CD14-positive monocyte (primary cell): ENCODE measurements at regions of chr3 and their contacts with region 1.

Region 1: GRCh38 chr3:72100601-72101187 is 315.7 kb upstream of the PROK2 start:
- DNase-seq: peak; percentile 99 to 100 (median 99)
- H3K4me3 ChIP-seq: peak overlapping the region; percentile 47 to 66 (median 48)
- H3K4me3 Mint-ChIP-seq: peak overlapping the region; percentile 81 to 91
- H3K27ac ChIP-seq: peak overlapping the region; percentile 97 to 99
- H3K27ac Mint-ChIP-seq: peak overlapping the region; percentile 100
- H3K4me1 ChIP-seq: peaks cover 60 to 61% of the 10 kb centered on the region in 2 donors
- H3K4me1 Mint-ChIP-seq: peaks cover 65% of the 10 kb centered on the region
- H3K27me3 ChIP-seq: no peaks in the 10 kb centered on the region
- H3K27me3 Mint-ChIP-seq: peaks cover 1 to 7% (median 1%) of the 10 kb centered on the region in 3 donors
- CTCF ChIP-seq: no peak

Region 2: DNA sequence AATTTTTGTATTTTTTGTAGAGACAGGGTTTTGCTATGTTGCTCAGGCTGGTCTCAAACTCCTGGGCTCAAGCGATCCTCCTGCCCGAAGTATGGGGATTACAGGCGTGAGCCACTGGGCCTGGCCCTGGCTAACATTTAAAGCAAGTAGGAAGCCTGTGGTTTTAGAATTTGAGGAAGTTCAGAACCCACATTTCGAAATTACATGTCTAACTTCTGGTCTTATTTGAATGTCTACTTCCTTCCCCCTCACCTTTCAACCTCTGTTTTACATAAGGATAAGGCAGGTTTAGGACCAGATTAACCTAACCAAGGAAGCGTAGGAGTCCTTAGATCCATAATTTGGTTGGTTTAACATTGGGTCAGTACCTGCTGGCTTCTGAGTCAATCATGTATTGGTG is 195.3 kb before region 1 on chr3:
- intact Hi-C with region 1: loop called in 1 of 2 experiments (anchors 10 kb)
- DNase-seq: peak; percentile 78 to 93 (median 88)
- H3K4me3 ChIP-seq: peak overlapping the region in 1 of 3 experiments; percentile 27
- H3K4me3 Mint-ChIP-seq: peak overlapping the region; percentile 39 to 76
- H3K27ac ChIP-seq: no peak overlapping the region
- H3K27ac Mint-ChIP-seq: peak overlapping the region in 6 of 7 donors; percentile 48 to 76 (median 64)
- H3K4me1 ChIP-seq: peaks cover 45 to 50% of the 10 kb centered on the region in 2 donors
- H3K4me1 Mint-ChIP-seq: peaks cover 51% of the 10 kb centered on the region
- H3K27me3 ChIP-seq: peaks cover 67 to 84% of the 10 kb centered on the region in 2 donors
- H3K27me3 Mint-ChIP-seq: peaks cover 92 to 95% (median 94%) of the 10 kb centered on the region in 3 donors
- CTCF ChIP-seq: no peak

Region 3: DNA sequence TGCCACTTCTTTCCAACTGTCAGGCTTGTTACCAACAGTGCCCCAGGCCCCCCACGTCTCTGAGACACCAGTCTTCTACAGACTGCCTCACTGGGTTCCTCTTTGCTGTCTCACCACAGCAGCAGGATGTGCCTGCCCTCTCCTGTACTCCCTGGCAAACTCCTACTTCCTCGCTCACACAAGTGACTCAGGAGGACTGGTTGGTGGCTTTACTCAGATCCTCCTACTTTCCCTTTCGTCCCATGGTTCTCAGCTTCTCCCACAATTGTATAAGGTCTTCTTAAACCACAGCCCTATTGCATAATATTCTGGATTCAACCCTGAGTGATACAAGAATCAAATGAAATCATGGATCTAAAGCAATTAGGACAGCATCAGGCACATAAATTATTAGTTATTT is 69.1 kb before region 1 on chr3:
- intact Hi-C with region 1: loop called in 1 of 2 experiments (anchors 5 kb)
- DNase-seq: peak; percentile 82 to 95 (median 92)
- H3K4me3 ChIP-seq: peak overlapping the region in 1 of 3 experiments; percentile 6
- H3K4me3 Mint-ChIP-seq: peak overlapping the region; percentile 28 to 59
- H3K27ac ChIP-seq: peak overlapping the region in 1 of 2 donors; percentile 50
- H3K27ac Mint-ChIP-seq: peak overlapping the region; percentile 79 to 93 (median 89)
- H3K4me1 ChIP-seq: peaks cover 48 to 53% of the 10 kb centered on the region in 2 donors
- H3K4me1 Mint-ChIP-seq: peaks cover 51% of the 10 kb centered on the region
- H3K27me3 ChIP-seq: no peaks in the 10 kb centered on the region
- H3K27me3 Mint-ChIP-seq: peaks cover 0 to 3% (median 3%) of the 10 kb centered on the region in 3 donors
- CTCF ChIP-seq: peak; percentile 35

Region 4: GRCh38 chr3:72082186-72082715 is 18.4 kb before region 1 on chr3:
- intact Hi-C with region 1: loop called in 1 of 2 experiments (anchors 2 kb)
- DNase-seq: peak; percentile 96 to 99 (median 97)
- H3K4me3 ChIP-seq: peak overlapping the region in 2 of 3 experiments; percentile 19 to 47
- H3K4me3 Mint-ChIP-seq: peak overlapping the region; percentile 46 to 67
- H3K27ac ChIP-seq: peak overlapping the region; percentile 91 to 98
- H3K27ac Mint-ChIP-seq: peak overlapping the region; percentile 95 to 99 (median 99)
- H3K4me1 ChIP-seq: peaks cover 80 to 93% of the 10 kb centered on the region in 2 donors
- H3K4me1 Mint-ChIP-seq: peaks cover 83% of the 10 kb centered on the region
- H3K27me3 ChIP-seq: no peaks in the 10 kb centered on the region
- H3K27me3 Mint-ChIP-seq: peaks cover 2 to 6% (median 3%) of the 10 kb centered on the region in 3 donors
- CTCF ChIP-seq: no peak

Region 5: DNA sequence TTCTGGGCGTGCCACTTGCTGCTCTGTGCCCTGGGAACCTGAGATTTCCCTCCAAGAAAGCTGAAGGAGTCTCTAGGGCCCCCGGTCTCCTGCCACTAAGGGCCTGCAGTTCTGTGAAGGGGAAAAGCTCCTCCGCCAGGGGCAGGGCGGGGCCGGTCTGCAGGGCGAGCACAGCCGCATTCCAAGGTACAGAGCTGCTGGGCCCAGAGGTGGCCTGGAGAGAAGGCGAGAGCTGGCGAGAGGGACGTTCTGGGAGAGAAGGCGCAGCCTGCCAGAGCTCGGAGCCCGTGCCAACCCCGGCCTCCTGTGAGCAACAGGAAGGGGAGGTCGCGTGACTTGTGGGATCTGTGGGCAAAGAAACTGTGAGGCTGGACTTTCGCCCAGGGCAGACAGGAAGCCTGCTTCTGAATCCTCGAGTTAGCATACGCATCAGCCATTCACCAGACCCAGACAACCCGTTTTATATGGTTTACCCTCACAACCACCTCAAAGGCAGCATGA is 247.2 kb after region 1 on chr3:
- intact Hi-C with region 1: loop called in 1 of 2 experiments (anchors 10 kb)
- DNase-seq: peak; percentile 88 to 92 (median 91)
- H3K4me3 ChIP-seq: peak overlapping the region in 1 of 3 experiments; percentile 55
- H3K4me3 Mint-ChIP-seq: peak overlapping the region; percentile 49 to 83
- H3K27ac ChIP-seq: peak overlapping the region; percentile 25 to 59
- H3K27ac Mint-ChIP-seq: peak overlapping the region in 5 of 7 donors; percentile 75 to 86 (median 77)
- H3K4me1 ChIP-seq: peaks cover 48 to 49% of the 10 kb centered on the region in 2 donors
- H3K4me1 Mint-ChIP-seq: peaks cover 53% of the 10 kb centered on the region
- H3K27me3 ChIP-seq: no peaks in the 10 kb centered on the region
- H3K27me3 Mint-ChIP-seq: peaks cover 2 to 18% (median 10%) of the 10 kb centered on the region in 3 donors
- CTCF ChIP-seq: no peak

Region 6: GRCh38 chr3:72405943-72406566 is 305.4 kb after region 1 on chr3:
- intact Hi-C with region 1: no loop called
- DNase-seq: no peak
- H3K4me3 ChIP-seq: no peak overlapping the region
- H3K4me3 Mint-ChIP-seq: no peak overlapping the region
- H3K27ac ChIP-seq: no peak overlapping the region
- H3K27ac Mint-ChIP-seq: no peak overlapping the region
- H3K4me1 ChIP-seq: peaks cover 13 to 26% of the 10 kb centered on the region in 2 donors
- H3K4me1 Mint-ChIP-seq: peaks cover 50% of the 10 kb centered on the region
- H3K27me3 ChIP-seq: no peaks in the 10 kb centered on the region
- H3K27me3 Mint-ChIP-seq: no peaks in the 10 kb centered on the region
- CTCF ChIP-seq: no peak